Activated naive CD4-positive, alpha-beta T cell treated with anti-CD3 and anti-CD28 coated beads, Interleukin-2, amount 10 ng/mL, durations not matched to agents 7 days and 5 days (primary cell): ENCODE measurements at regions of chr6 and their contacts with region 1.

Region 1: DNA sequence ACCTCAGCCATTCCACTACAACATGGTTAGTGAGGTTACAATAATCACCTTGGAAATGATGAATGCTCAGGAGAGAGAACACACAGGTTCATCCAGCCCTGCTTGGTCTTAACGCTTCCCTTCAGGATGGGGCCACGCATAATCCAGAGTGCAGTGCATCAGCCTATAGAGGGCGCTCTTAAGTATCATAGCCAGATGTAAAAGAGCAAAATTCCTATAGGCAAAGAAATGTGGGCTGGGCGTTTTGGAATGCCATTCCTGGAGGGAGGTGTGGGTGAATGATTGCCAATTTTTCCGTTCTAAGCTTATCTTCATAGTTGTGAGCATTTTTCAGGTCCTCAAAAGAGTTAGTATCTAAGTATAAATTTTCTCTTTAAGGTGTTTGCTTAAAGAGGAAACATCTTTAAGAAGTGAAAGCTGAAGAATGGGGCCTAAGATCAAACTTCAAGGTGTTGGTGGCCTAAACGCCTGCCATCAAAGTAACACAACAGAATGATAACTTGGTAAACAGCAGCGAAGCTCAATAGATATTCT is 1.8 kb downstream of the RIPOR2 start:
- DNase-seq: peak; percentile 69
- H3K4me3 Mint-ChIP-seq: peak overlapping the region; percentile 98
- H3K27ac Mint-ChIP-seq: peak overlapping the region; percentile 99
- H3K4me1 Mint-ChIP-seq: peaks cover 47% of the 10 kb centered on the region
- H3K27me3 Mint-ChIP-seq: peaks cover 4% of the 10 kb centered on the region

Region 2: GRCh38 chr6:24905483-24905882 is 28.5 kb before region 1 on chr6:
- CTCF ChIA-PET with region 1: interaction called, 75 read pairs
- DNase-seq: no peak
- H3K4me3 Mint-ChIP-seq: no peak overlapping the region
- H3K27ac Mint-ChIP-seq: peak overlapping the region; percentile 29
- H3K4me1 Mint-ChIP-seq: peaks cover 96% of the 10 kb centered on the region
- H3K27me3 Mint-ChIP-seq: no peaks in the 10 kb centered on the region

Region 3: DNA sequence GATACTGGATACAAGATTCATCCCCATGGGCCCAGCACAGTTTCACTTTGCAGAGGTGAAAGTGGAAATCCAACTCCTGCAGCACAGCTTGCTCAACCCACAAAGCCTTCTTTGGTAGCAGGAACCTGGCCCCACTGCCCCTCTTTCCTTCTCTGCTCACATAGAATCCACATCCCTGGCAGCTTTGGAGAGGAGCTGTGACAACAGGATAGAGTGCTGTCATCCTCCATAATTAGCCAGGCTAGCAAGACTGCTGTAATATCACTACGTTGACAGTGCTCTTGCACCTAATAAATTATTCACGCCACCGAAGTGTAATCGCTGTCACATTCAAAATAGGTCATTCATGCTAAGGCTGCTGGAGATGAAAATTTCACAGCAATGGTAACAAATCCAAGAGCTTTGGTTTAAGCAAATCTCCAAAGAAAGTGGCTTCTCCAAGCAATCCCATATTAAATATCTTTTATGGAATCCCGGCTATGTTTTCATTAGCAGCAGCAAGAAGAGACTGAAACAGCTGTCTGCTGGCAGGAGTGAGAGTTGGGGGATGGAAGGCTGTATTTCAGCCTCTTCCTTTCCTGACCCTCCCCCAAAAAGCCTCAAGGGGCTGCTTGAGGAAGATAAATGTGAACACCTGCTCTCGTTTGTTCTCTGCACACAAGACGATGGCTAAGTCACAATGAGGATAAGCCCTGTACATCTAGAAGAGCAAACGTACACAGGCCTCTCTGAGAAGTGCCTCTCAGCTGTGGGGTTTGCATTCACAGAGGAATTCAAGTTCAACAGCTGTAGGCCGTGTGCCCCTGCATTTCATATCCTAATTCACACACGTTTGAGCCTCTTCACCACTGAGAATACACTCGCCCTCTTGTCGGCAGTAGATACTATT is 14.7 kb before region 1 on chr6:
- CTCF ChIA-PET with region 1: interaction called, 41 read pairs
- DNase-seq: peak; percentile 58
- H3K4me3 Mint-ChIP-seq: peak overlapping the region; percentile 43
- H3K27ac Mint-ChIP-seq: peak overlapping the region; percentile 85
- H3K4me1 Mint-ChIP-seq: peaks cover 96% of the 10 kb centered on the region
- H3K27me3 Mint-ChIP-seq: no peaks in the 10 kb centered on the region

Region 4: DNA sequence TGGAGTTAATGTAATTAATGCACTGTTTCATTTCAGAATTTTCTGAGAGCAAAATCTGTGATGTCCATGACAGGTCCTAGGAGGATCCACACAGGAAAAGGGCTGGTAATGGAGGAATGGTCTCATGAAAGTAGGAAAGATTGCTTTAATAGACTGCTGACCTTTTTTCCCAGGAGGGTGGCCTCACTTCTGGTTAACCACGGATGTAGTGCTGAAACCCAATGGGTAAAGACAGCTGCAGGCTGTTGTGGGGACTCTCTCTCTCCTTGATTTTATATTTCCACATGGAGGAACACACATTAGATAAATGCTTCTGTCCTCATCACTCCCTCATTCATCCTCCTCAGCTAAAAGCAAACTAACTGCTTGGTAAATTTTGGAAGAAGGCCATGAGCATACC is 25.4 kb after region 1 on chr6:
- CTCF ChIA-PET with region 1: interaction called, 13 read pairs
- DNase-seq: no peak
- H3K4me3 Mint-ChIP-seq: no peak overlapping the region
- H3K27ac Mint-ChIP-seq: peak overlapping the region; percentile 49
- H3K4me1 Mint-ChIP-seq: peaks cover 87% of the 10 kb centered on the region
- H3K27me3 Mint-ChIP-seq: no peaks in the 10 kb centered on the region

Region 5: DNA sequence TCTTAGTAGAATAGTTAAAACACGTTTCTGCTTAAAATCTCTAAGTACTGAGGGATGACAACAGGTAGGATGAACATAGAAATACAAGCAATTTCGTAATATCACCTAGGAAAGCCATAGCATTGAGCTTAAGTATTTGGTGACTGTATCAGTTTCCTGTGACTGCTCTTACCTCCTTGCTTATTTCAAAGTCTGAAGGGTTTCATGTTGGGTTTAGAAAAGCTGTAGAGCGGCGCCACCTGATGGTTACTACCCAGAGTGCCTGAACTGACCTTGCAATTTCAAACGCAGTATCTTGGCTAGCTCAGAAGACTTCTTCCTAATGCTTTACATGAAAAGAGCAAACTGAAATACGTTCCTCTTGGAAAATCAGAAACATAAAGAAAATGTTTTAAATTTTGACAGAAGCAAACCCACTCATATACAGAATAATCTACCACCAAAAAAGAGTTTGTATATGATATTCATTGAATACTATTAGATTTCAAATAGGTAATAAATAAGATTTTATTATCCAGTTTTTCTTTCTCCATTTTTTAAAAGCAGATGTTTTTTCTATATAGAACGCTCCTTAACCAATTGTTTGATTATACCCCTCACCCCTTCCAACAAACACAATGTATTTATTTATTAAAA is 84.1 kb after region 1 on chr6:
- CTCF ChIA-PET with region 1: interaction called, 73 read pairs
- DNase-seq: peak; percentile 90
- H3K4me3 Mint-ChIP-seq: peak overlapping the region; percentile 17
- H3K27ac Mint-ChIP-seq: peak overlapping the region; percentile 33
- H3K4me1 Mint-ChIP-seq: peaks cover 52% of the 10 kb centered on the region
- H3K27me3 Mint-ChIP-seq: no peaks in the 10 kb centered on the region